ENCODE measurements at regions of chr10 and their contacts with region 1.

Region 1: DNA sequence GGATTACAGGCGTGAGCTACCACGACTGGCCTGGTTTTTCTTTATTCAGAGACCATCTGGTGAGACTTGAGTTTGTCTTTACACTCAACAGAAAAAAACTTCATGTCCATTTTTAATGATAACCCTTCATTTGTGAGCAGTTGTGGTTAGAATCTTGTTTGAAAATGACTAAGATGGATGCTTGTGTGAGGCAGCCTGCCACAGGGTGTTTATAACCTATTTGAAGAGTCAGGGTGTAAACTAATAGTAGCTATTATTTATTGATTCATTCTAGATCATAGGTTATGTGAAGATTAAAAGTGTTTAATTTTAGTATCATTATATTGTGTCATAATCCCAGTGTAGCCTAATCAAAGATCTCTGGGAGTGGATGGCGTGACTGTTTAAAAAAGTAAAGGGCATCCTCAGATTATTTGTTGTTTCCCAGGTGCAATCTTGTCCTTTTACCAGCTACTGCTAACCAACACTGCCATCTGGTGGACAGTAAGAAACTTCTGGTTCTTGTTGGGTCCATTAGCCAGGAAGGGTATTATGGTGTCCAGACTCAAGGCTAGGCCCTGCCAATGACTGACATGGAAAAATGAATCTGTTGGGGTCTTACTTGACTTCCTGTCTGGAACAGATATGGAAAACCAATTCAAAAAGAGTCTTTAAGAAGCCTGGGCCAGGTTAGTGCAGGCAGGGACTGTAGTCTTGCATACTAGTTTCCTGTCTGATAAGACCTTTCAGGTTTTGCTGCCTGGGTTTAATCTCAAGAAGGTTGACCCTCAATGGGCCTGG is 24.9 kb downstream of the NRBF2 start:
- DNase-seq: peak; percentile 25
- H3K4me3 Mint-ChIP-seq: no peak overlapping the region
- H3K27ac Mint-ChIP-seq: no peak overlapping the region
- H3K4me1 Mint-ChIP-seq: peaks cover 27% of the 10 kb centered on the region
- H3K27me3 Mint-ChIP-seq: no peaks in the 10 kb centered on the region

Region 2: GRCh38 chr10:62437696-62438095 is 720.3 kb before region 1 on chr10:
- intact Hi-C with region 1: loop called (anchors 1 kb)
- DNase-seq: no peak
- H3K4me3 Mint-ChIP-seq: no peak overlapping the region
- H3K27ac Mint-ChIP-seq: no peak overlapping the region
- H3K4me1 Mint-ChIP-seq: peaks cover 12% of the 10 kb centered on the region
- H3K27me3 Mint-ChIP-seq: peaks cover 50% of the 10 kb centered on the region

Region 3: GRCh38 chr10:62492012-62492869 is 665.8 kb before region 1 on chr10:
- intact Hi-C with region 1: loop called (anchors 1 kb)
- DNase-seq: no peak
- H3K4me3 Mint-ChIP-seq: no peak overlapping the region
- H3K27ac Mint-ChIP-seq: no peak overlapping the region
- H3K4me1 Mint-ChIP-seq: no peaks in the 10 kb centered on the region
- H3K27me3 Mint-ChIP-seq: peaks cover 33% of the 10 kb centered on the region

Region 4: GRCh38 chr10:62554632-62555199 is 603.3 kb before region 1 on chr10:
- intact Hi-C with region 1: loop called (anchors 2 kb)
- DNase-seq: no peak
- H3K4me3 Mint-ChIP-seq: no peak overlapping the region
- H3K27ac Mint-ChIP-seq: no peak overlapping the region
- H3K4me1 Mint-ChIP-seq: no peaks in the 10 kb centered on the region
- H3K27me3 Mint-ChIP-seq: peaks cover 35% of the 10 kb centered on the region

Region 5: DNA sequence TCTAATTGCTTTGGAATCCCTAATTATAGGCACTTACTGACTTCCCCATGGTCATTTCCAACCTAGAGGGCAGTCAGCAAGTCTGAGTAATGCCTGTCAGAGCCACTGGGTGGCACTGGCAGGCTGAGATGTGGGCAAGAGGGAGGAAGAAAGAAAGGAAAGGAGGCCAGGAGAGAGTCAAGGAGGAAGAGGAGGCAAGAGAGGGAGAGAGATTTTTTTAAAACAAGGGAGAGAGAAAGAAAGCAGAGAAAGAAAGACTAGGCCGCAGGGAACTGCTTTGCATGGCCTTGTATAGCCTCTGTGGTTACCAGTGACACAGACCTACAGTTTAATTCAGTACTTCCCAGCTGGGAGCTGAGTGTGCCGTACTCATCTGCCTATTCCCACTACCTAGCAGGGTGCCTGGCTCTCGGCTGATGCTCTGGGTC is 563.9 kb before region 1 on chr10:
- intact Hi-C with region 1: loop called (anchors 1 kb)
- DNase-seq: peak; percentile 24
- H3K4me3 Mint-ChIP-seq: no peak overlapping the region
- H3K27ac Mint-ChIP-seq: no peak overlapping the region
- H3K4me1 Mint-ChIP-seq: peaks cover 13% of the 10 kb centered on the region
- H3K27me3 Mint-ChIP-seq: peaks cover 17% of the 10 kb centered on the region

Region 6: DNA sequence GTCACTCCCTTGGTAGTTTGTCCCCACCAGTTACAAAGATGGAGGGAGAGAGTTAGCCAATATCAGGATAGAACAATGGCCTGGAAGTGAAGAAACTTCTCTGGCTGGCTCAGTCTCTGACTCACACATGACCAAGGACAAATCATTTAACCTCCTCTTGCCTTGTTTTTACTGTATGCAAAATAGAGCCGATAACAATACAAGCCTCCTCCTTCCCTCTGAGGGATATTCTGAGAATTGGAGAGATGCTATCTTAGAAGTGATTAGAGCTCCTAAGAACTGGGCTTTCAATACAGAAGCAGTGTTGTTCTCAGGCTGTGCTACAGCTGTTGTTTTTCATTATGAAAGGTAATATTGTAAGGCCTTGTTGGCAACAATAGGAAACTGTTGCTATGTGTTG is 254.2 kb before region 1 on chr10:
- intact Hi-C with region 1: no loop called
- DNase-seq: no peak
- H3K4me3 Mint-ChIP-seq: no peak overlapping the region
- H3K27ac Mint-ChIP-seq: peak overlapping the region; percentile 34
- H3K4me1 Mint-ChIP-seq: peaks cover 25% of the 10 kb centered on the region
- H3K27me3 Mint-ChIP-seq: peaks cover 2% of the 10 kb centered on the region

Region 7: DNA sequence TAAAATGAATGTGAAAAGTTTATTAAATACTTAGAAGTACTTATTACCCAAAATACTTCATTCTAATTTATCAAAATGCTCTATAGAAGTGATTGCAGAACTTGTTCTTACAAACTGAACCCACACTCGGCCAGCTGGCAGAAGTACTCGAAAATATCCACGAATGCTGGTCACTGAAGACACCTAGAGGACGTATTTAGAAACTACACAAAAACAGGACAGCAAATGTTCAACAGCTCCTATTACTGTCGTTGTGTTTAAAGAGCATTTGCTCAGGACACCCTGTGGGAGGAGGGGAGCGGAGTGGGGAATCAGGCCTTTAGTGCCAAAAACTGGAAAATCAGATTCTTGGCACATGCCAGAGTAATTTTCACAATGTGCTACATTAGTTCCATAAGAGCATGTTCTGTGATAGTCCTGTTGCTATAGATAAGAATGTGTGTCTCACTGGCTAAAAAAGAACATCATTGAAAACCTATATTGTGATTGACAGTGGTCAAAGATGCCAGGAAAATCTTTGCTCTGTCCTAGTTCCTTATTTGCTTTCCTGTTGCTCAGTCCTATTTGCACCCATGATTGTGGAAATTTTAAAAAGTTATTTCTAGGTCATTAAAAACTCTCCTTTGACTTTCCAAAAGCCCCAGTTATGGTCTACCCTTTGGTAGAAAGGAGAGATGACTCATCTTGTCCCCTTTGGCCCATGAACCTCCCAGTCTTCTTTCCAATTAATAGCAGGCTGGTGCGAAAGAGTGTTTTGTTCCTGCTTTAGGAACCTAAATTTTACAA is 73.9 kb before region 1 on chr10:
- intact Hi-C with region 1: loop called (anchors 5 kb)
- DNase-seq: peak; percentile 16
- H3K4me3 Mint-ChIP-seq: no peak overlapping the region
- H3K27ac Mint-ChIP-seq: no peak overlapping the region
- H3K4me1 Mint-ChIP-seq: peaks cover 12% of the 10 kb centered on the region
- H3K27me3 Mint-ChIP-seq: peaks cover 23% of the 10 kb centered on the region

Region 8: GRCh38 chr10:63206997-63207811 is 49.2 kb after region 1 on chr10:
- intact Hi-C with region 1: no loop called
- DNase-seq: no peak
- H3K4me3 Mint-ChIP-seq: peak overlapping the region; percentile 35
- H3K27ac Mint-ChIP-seq: peak overlapping the region; percentile 72
- H3K4me1 Mint-ChIP-seq: peaks cover 52% of the 10 kb centered on the region
- H3K27me3 Mint-ChIP-seq: no peaks in the 10 kb centered on the region

Region 9: DNA sequence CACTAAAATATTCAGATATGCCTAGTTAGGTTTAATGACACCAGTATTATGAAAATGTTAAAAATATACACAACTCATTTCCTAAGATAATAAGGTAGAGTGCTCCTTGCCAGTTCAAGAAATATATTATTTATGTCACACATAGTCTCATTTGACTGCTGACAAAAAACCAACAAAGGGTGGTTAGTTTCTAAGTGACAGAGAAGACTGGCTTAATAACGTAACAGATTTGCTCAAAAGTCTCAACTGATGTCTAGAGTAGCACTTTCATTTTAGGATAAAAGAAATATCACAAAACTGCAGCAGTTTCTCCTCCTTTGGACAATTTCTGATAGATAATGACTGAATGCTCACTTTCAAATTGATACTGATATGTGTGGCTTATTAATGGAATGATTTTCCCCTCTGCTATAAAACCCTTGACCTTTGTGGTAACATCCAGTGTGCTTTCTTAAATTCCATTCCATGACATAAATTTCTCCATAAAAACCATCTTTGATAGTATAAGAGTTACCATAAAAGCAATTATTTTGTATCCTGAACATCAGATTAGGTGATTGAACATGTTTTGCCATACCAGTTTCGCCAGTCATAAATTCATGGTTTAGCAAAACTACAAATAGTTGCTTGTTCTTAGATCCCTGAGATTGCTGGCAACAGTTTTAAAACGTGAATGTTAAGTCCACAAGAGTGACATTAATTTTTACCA is 69.3 kb after region 1 on chr10:
- intact Hi-C with region 1: no loop called
- DNase-seq: no peak
- H3K4me3 Mint-ChIP-seq: peak overlapping the region; percentile 41
- H3K27ac Mint-ChIP-seq: peak overlapping the region; percentile 74
- H3K4me1 Mint-ChIP-seq: peaks cover 34% of the 10 kb centered on the region
- H3K27me3 Mint-ChIP-seq: no peaks in the 10 kb centered on the region

Measured in activated T-helper 2 cell treated with anti-CD3 and anti-CD28 coated beads, Interferon-gamma antibody, Interleukin-2, Interleukin-4, amounts not matched to agents 10 μg/mL and 5 μg/mL and 100 μg/mL, durations not matched to agents 14 hours and 24 hours and 36 hours (primary cell).